PC-9 (cell line): ENCODE measurements at regions of chr2 and their contacts with region 1.

Region 1: DNA sequence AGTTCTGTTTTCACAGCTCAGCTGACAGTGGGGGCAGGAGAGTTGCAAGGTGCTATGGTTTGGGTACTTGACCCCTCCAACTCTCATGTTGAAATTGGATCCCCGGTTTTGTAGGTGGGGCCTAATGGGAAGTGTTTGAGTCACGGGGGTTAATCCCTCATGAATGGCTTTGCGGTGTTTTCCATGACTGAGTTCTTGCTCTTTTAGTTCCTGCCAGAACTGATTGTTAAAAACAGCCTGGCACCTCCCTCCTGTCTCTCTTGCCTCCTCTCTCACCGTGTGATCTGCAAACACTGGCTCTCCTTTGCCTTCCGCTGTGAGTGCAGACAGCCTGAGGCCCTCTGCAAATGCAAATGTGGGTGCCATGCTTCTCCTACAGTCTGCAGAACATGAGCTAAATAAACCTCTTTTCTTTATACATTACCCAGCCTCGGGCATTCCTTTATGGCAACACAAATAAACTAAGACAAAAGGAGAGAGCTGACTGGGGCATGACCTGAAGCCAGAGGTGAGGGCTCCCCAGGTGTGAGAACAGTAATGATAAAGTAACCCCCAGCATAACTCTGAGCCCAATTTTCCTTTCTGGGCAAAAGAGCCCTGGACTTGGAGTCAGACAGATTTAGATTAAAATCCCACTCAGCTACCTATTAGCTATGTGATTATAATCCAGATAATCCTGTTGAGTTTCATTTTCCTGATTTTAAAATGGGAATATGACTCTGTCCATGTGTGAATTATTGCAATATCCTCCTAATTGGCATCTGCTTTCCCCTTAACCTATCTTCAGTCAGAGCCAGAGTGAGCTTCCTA is 64.9 kb upstream of the CAPN13 start:
- DNase-seq: peak; percentile 31 to 89
- H3K4me3 ChIP-seq: no peak overlapping the region
- H3K27ac ChIP-seq: peak overlapping the region; percentile 59
- H3K4me1 ChIP-seq: peaks cover 38% of the 10 kb centered on the region
- H3K27me3 ChIP-seq: no peaks in the 10 kb centered on the region
- CTCF ChIP-seq: no peak

Region 2: GRCh38 chr2:31138037-31138962 is 266.1 kb after region 1 on chr2 and contains the start of gene GALNT14:
- CTCF ChIA-PET with region 1: no interaction called
- POLR2A ChIA-PET with region 1: no interaction called
- intact Hi-C with region 1: loop called (anchors 10 kb)
- DNase-seq: peak; percentile 49 to 64
- H3K4me3 ChIP-seq: peak within 1 kb of the TSS; percentile 66
- H3K27ac ChIP-seq: peak within 1 kb of the TSS; percentile 36; the same call in 1 of the 2 replicates
- H3K4me1 ChIP-seq: peaks cover 36% of the 10 kb centered on the region
- H3K27me3 ChIP-seq: no peaks in the 10 kb centered on the region
- CTCF ChIP-seq: peak; percentile 69
- total RNA-seq, gene GALNT14: 2.4 and 3.1 TPM in 2 replicates

Region 3: DNA sequence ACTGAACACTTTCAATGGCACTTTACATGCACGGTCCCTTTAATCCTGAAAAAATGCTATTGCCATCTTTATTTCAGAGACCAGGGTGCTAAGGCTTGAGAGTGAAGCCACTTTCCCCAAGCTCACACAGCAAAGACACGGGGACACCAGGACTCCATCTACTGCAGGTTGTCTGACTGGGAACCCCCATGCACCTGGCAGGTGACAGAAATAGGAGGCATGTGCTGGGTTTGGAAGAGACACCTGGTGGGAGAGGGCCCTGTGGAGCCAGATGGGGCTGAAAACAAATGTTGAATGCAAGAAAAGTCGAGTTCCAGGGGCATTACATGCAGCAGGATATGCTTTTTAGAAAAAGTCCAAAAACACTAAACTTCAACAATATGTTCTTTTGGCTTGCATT is 356.5 kb after region 1 on chr2:
- CTCF ChIA-PET with region 1: interaction called, 10 read pairs
- POLR2A ChIA-PET with region 1: no interaction called
- intact Hi-C with region 1: no loop called
- DNase-seq: no peak
- H3K4me3 ChIP-seq: no peak overlapping the region
- H3K27ac ChIP-seq: no peak overlapping the region
- H3K4me1 ChIP-seq: peaks cover 10% of the 10 kb centered on the region
- H3K27me3 ChIP-seq: no peaks in the 10 kb centered on the region
- CTCF ChIP-seq: no peak